IMR-90 (cell line): ENCODE measurements at regions of chr6 and their contacts with region 1.

Region 1: GRCh38 chr6:133512410-133513016 is 271.4 kb downstream of the EYA4 start:
- DNase-seq: peak; percentile 67
- ATAC-seq: peak; percentile 72
- H3K4me3 ChIP-seq: no peak overlapping the region
- H3K27ac ChIP-seq: no peak overlapping the region
- H3K4me1 ChIP-seq: no peaks in the 10 kb centered on the region
- H3K27me3 ChIP-seq: no peaks in the 10 kb centered on the region
- CTCF ChIP-seq: peak; percentile 81
- POLR2A ChIP-seq: peak; percentile 46; the same call in 1 of the 2 replicates
- RAD21 ChIP-seq: peak; percentile 92

Region 2: GRCh38 chr6:132962936-132963868 is 549.3 kb before region 1 on chr6:
- CTCF ChIA-PET with region 1: no interaction called
- POLR2A ChIA-PET with region 1: no interaction called
- dilution Hi-C with region 1: no loop called
- in situ Hi-C with region 1: loop called (anchors 10 kb)
- intact Hi-C with region 1: loop called (anchors 1 kb)
- DNase-seq: peak; percentile 77
- ATAC-seq: peak; percentile 60
- H3K4me3 ChIP-seq: no peak overlapping the region
- H3K27ac ChIP-seq: no peak overlapping the region
- H3K4me1 ChIP-seq: peaks cover 9% of the 10 kb centered on the region
- H3K27me3 ChIP-seq: no peaks in the 10 kb centered on the region
- CTCF ChIP-seq: peak; percentile 71
- POLR2A ChIP-seq: no peak
- RAD21 ChIP-seq: peak; percentile 82